Activated CD4-positive, alpha-beta T cell treated with anti-CD3 and anti-CD28 coated beads for 36 hours (primary cell): ENCODE measurements at regions of chr15 and their contacts with region 1.

Region 1: GRCh38 chr15:33086507-33087121 is 107.9 kb downstream of the FMN1 start:
- DNase-seq: peak; percentile 14
- ATAC-seq: peak; percentile 74
- H3K4me3 Mint-ChIP-seq: no peak overlapping the region
- H3K27ac Mint-ChIP-seq: no peak overlapping the region
- H3K4me1 Mint-ChIP-seq: peaks cover 9% of the 10 kb centered on the region
- H3K27me3 Mint-ChIP-seq: no peaks in the 10 kb centered on the region

Region 2: GRCh38 chr15:32104061-32104995 is 982.3 kb before region 1 on chr15:
- CTCF ChIA-PET with region 1: no interaction called
- POLR2A ChIA-PET with region 1: no interaction called
- intact Hi-C with region 1: no loop called
- DNase-seq: no peak
- ATAC-seq: no peak
- H3K4me3 Mint-ChIP-seq: no peak overlapping the region
- H3K27ac Mint-ChIP-seq: no peak overlapping the region
- H3K4me1 Mint-ChIP-seq: peaks cover 9% of the 10 kb centered on the region
- H3K27me3 Mint-ChIP-seq: peaks cover 20% of the 10 kb centered on the region

Region 3: GRCh38 chr15:32936283-32936918 is 150.2 kb before region 1 on chr15:
- CTCF ChIA-PET with region 1: no interaction called
- POLR2A ChIA-PET with region 1: no interaction called
- intact Hi-C with region 1: no loop called
- DNase-seq: no peak
- ATAC-seq: no peak
- H3K4me3 Mint-ChIP-seq: no peak overlapping the region
- H3K27ac Mint-ChIP-seq: no peak overlapping the region
- H3K4me1 Mint-ChIP-seq: no peaks in the 10 kb centered on the region
- H3K27me3 Mint-ChIP-seq: peaks cover 12% of the 10 kb centered on the region

Region 4: GRCh38 chr15:33021806-33022389 is 64.7 kb before region 1 on chr15:
- CTCF ChIA-PET with region 1: interaction called, 3 read pairs
- POLR2A ChIA-PET with region 1: no interaction called
- intact Hi-C with region 1: loop called in 1 of 2 experiments (anchors 5 kb)
- DNase-seq: no peak
- ATAC-seq: no peak
- H3K4me3 Mint-ChIP-seq: no peak overlapping the region
- H3K27ac Mint-ChIP-seq: no peak overlapping the region
- H3K4me1 Mint-ChIP-seq: no peaks in the 10 kb centered on the region
- H3K27me3 Mint-ChIP-seq: no peaks in the 10 kb centered on the region

Region 5: GRCh38 chr15:33104212-33104611 is 17.6 kb after region 1 on chr15:
- CTCF ChIA-PET with region 1: interaction called, 10 read pairs
- POLR2A ChIA-PET with region 1: no interaction called
- intact Hi-C with region 1: no loop called
- DNase-seq: peak; percentile 56
- ATAC-seq: peak; percentile 98
- H3K4me3 Mint-ChIP-seq: no peak overlapping the region
- H3K27ac Mint-ChIP-seq: peak overlapping the region; percentile 49
- H3K4me1 Mint-ChIP-seq: peaks cover 20% of the 10 kb centered on the region
- H3K27me3 Mint-ChIP-seq: no peaks in the 10 kb centered on the region

Region 6: DNA sequence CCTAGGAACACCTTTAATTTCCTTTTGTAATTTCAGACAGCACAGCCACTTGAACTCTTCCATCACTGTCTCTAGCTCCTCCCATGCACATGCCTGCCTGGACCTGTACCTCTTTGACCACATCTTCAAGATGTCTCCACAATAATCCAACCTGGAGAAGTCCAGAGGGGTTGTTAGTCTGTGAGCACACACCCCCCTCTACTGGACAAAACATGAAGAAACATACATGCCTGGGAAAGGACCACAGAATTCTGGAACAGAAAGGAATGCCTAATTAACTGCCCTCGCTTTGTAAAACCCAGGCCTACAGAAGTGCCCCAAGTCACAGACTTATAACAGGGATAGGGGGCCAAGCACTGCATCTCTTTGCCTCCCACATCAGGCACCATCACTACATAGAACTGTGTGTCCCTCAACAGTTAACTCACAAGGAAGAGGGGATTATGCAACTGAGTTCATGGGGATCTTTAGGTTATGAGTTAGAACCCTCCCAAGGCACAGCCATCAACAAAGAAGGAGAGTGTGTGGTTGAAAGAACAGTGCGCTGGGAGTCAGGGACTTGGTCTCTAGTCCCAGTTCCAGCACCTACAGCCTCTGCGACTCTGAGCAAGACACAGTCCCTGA is 46.2 kb after region 1 on chr15:
- CTCF ChIA-PET with region 1: interaction called, 48 read pairs
- POLR2A ChIA-PET with region 1: no interaction called
- intact Hi-C with region 1: loop called (anchors 1 kb)
- DNase-seq: peak; percentile 21
- ATAC-seq: peak; percentile 39
- H3K4me3 Mint-ChIP-seq: no peak overlapping the region
- H3K27ac Mint-ChIP-seq: no peak overlapping the region
- H3K4me1 Mint-ChIP-seq: peaks cover 1% of the 10 kb centered on the region
- H3K27me3 Mint-ChIP-seq: no peaks in the 10 kb centered on the region

Region 7: DNA sequence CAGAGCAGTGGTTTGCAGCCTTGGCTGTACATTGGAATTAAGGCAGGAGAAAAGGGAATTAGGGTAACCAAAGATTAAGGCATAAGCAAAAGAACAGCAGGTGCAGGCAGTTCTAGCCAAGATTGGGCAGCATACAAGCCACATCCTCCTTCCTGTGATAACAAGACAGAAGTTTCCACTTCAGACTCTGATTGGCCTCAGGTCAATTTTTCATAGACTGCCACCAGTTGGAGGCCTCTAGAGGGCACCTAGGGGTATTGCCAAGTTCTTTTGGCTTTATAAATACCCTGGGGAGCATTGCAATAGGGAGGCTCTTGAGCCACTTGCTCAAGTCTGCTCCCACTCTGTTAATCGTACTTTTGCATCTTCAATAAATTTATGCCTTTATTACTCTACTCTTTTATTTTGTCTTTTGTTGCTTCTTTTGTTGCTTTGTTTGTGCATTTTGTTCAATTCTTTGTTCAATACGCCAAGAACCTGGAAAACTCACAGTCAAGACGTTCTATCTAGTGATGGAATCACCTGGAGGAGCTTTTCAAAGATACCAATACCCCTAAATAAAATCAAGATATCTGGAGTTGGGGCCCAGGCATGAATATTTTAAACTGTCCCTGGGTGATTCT is 140.1 kb after region 1 on chr15:
- CTCF ChIA-PET with region 1: interaction called, 3 read pairs
- POLR2A ChIA-PET with region 1: no interaction called
- intact Hi-C with region 1: loop called (anchors 5 kb)
- DNase-seq: peak; percentile 78
- ATAC-seq: peak; percentile 97
- H3K4me3 Mint-ChIP-seq: no peak overlapping the region
- H3K27ac Mint-ChIP-seq: no peak overlapping the region
- H3K4me1 Mint-ChIP-seq: peaks cover 18% of the 10 kb centered on the region
- H3K27me3 Mint-ChIP-seq: no peaks in the 10 kb centered on the region

Region 8: GRCh38 chr15:33292717-33293307 is 206.2 kb after region 1 on chr15:
- CTCF ChIA-PET with region 1: no interaction called
- POLR2A ChIA-PET with region 1: no interaction called
- intact Hi-C with region 1: loop called in 1 of 2 experiments (anchors 5 kb)
- DNase-seq: peak; percentile 77
- ATAC-seq: no peak
- H3K4me3 Mint-ChIP-seq: no peak overlapping the region
- H3K27ac Mint-ChIP-seq: no peak overlapping the region
- H3K4me1 Mint-ChIP-seq: no peaks in the 10 kb centered on the region
- H3K27me3 Mint-ChIP-seq: no peaks in the 10 kb centered on the region

Region 9: DNA sequence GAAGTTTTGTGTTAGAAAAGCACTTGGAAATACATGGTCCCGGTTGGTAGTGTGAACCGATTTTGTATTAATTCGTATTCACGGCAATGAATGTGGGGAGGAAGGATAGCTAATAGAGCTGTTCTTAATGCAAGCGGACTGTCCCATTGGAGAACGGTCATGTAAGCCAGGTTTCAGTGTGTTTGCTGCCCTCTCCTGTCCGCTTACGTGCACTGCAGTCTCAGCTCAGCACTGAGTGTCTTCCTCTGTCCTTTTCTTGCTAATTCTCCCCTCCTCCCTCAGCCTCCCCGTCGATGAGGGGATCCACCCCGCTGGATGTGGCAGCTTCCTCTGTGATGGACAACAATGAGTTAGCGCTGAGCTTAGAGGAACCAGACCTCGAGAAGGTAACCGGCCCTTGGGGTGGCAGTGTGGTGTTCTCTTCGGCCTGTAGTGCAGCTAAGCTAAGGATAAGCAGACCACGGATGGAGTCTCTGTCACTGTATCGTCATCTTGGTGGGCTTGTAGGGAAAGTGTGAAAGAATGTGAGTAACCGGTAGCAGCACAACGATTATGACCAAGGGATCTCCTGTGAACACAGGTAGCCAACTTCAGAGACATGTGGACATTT is 614.2 kb after region 1 on chr15:
- CTCF ChIA-PET with region 1: interaction called, 9 read pairs
- POLR2A ChIA-PET with region 1: no interaction called
- intact Hi-C with region 1: loop called (anchors 1 kb)
- DNase-seq: peak; percentile 77
- ATAC-seq: peak; percentile 77
- H3K4me3 Mint-ChIP-seq: no peak overlapping the region
- H3K27ac Mint-ChIP-seq: no peak overlapping the region
- H3K4me1 Mint-ChIP-seq: no peaks in the 10 kb centered on the region
- H3K27me3 Mint-ChIP-seq: peaks cover 6% of the 10 kb centered on the region